ENCODE measurements at regions of chr4 and their contacts with region 1.

Region 1: DNA sequence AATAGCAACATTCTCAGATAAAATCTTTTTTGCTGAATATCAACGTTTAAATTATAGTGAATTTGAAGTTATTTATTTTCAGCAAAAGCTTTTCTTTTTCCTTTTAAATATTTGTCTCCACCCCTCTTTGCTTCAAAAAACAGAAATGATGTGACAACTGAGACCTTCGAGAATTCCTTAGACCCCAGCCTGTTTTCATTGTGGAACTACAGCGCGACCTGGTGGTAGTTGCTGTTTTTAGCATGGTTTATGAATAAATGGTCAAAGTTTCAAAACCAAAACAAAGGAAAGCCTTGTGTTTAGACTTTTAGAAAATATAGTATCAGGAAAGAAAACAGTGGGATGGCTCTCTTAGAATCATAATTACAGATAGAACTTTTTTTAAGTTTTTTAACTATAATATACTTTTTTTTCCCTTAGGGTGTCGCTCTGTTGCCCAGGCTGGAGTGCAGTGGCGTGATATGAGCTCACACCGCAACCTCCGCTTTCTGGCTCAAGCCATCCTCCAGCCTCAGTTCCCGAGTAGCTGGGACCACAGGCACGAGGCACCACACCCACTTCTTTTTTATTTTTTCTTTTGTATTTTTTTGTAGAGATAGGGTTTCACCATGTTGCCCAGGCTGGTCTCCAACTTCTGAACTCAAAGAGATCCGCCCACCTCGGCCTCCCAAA is 26.8 kb upstream of the TMEM184C start:
- DNase-seq: peak in 1 of 2 donors; percentile 79
- H3K4me3 ChIP-seq: no peak overlapping the region
- H3K27ac ChIP-seq: no peak overlapping the region
- H3K4me1 ChIP-seq: no peaks in the 10 kb centered on the region
- H3K27me3 ChIP-seq: no peaks in the 10 kb centered on the region
- CTCF ChIP-seq: peak; percentile 67 to 83 (median 78)

Region 2: GRCh38 chr4:147019061-147019460 is 571.3 kb before region 1 on chr4:
- intact Hi-C with region 1: loop called (anchors 1 kb)
- DNase-seq: peak in 1 of 2 donors; percentile 78
- H3K4me3 ChIP-seq: no peak overlapping the region
- H3K27ac ChIP-seq: no peak overlapping the region
- H3K4me1 ChIP-seq: no peaks in the 10 kb centered on the region
- H3K27me3 ChIP-seq: no peaks in the 10 kb centered on the region
- CTCF ChIP-seq: peak; percentile 50 to 76 (median 71)

Region 3: GRCh38 chr4:147111033-147111367 is 479.4 kb before region 1 on chr4:
- intact Hi-C with region 1: loop called (anchors 2 kb)
- DNase-seq: no peak
- H3K4me3 ChIP-seq: no peak overlapping the region
- H3K27ac ChIP-seq: no peak overlapping the region
- H3K4me1 ChIP-seq: no peaks in the 10 kb centered on the region
- H3K27me3 ChIP-seq: no peaks in the 10 kb centered on the region
- CTCF ChIP-seq: peak in 1 of 3 experiments; percentile 26

Region 4: GRCh38 chr4:147160908-147161513 is 429.4 kb before region 1 on chr4:
- intact Hi-C with region 1: loop called (anchors 1 kb)
- DNase-seq: no peak
- H3K4me3 ChIP-seq: no peak overlapping the region
- H3K27ac ChIP-seq: no peak overlapping the region
- H3K4me1 ChIP-seq: no peaks in the 10 kb centered on the region
- H3K27me3 ChIP-seq: no peaks in the 10 kb centered on the region
- CTCF ChIP-seq: peak; percentile 37 to 86 (median 78)

Region 5: GRCh38 chr4:147518846-147519767 is 71.3 kb before region 1 on chr4:
- intact Hi-C with region 1: loop called (anchors 2 kb)
- DNase-seq: no peak
- H3K4me3 ChIP-seq: no peak overlapping the region
- H3K27ac ChIP-seq: no peak overlapping the region
- H3K4me1 ChIP-seq: peaks cover 0 to 3% of the 10 kb centered on the region in 2 donors
- H3K27me3 ChIP-seq: no peaks in the 10 kb centered on the region
- CTCF ChIP-seq: peak; percentile 43 to 79 (median 77)

Region 6: DNA sequence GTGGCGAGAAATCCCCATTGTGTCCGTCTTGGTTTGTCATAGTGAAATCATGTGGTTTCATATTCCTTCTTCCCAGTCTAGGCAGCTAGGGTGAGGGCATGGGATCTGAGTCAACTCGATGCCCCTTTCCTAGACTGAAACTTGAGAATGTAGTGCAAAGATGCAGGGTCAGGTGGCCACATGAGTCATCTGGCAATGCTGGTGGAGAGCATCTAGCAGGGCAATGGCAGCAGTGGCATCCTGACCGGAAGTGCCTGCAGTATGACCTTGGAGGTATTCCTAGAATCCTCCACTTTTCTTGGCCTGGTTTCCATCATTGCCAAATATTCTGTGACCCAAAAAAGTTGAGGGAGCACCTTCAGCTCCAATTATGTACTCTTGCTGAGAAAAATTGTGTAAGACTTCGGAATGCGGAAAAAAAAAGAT is 12.3 kb before region 1 on chr4:
- intact Hi-C with region 1: no loop called
- DNase-seq: peak in 1 of 2 donors; percentile 65
- H3K4me3 ChIP-seq: no peak overlapping the region
- H3K27ac ChIP-seq: no peak overlapping the region
- H3K4me1 ChIP-seq: no peaks in the 10 kb centered on the region
- H3K27me3 ChIP-seq: no peaks in the 10 kb centered on the region
- CTCF ChIP-seq: no peak

Region 7: GRCh38 chr4:147749811-147750321 is 159.5 kb after region 1 on chr4:
- intact Hi-C with region 1: no loop called
- DNase-seq: no peak
- H3K4me3 ChIP-seq: no peak overlapping the region
- H3K27ac ChIP-seq: no peak overlapping the region
- H3K4me1 ChIP-seq: peaks cover 4 to 43% of the 10 kb centered on the region in 2 donors
- H3K27me3 ChIP-seq: no peaks in the 10 kb centered on the region
- CTCF ChIP-seq: no peak